Endothelial cell of umbilical vein (primary cell): ENCODE measurements at regions of chr5 and their contacts with region 1.

Region 1: DNA sequence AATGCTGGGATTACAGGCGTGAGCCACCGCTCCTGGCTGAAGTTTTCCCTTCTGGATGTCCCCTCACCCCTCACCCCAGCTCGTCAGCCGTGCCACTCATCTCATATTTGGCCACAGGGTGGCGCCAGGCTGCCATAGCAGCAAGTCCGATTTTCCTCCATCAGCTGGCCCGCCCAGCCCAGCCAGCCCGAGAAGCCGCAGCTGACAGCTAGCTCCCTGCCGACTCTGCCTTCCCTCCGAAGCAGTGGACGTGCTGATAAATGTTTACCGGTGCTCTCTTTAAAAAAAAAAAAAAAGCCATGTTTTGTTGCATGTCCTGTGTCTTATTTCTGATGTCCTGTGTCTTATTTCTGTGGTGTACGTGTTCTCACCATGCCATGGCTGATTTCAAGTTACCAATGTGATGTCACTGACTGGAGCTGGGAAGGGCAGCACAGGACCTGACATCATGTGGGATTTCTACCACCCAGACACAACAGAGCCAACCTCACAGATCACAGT is 58.3 kb downstream of the PFDN1 start:
- DNase-seq: peak; percentile 88
- H3K4me3 ChIP-seq: no peak overlapping the region
- H3K27ac ChIP-seq: peak overlapping the region; percentile 57
- H3K4me1 ChIP-seq: peaks cover 41% of the 10 kb centered on the region
- H3K27me3 ChIP-seq: no peaks in the 10 kb centered on the region
- CTCF ChIP-seq: peak; percentile 72 to 86
- POLR2A ChIP-seq: no peak

Region 2: GRCh38 chr5:140042643-140043500 is 201.7 kb before region 1 on chr5 and contains the start of gene NRG2:
- CTCF ChIA-PET with region 1: no interaction called
- POLR2A ChIA-PET with region 1: no interaction called
- dilution Hi-C with region 1: no loop called
- intact Hi-C with region 1: no loop called
- DNase-seq: peak; percentile 65
- H3K4me3 ChIP-seq: peak within 1 kb of the TSS; percentile 23 to 54 (median 44)
- H3K27ac ChIP-seq: no peak within 1 kb of the TSS
- H3K4me1 ChIP-seq: peaks cover 27% of the 10 kb centered on the region
- H3K27me3 ChIP-seq: peaks cover 3 to 12% of the 10 kb centered on the region in 2 experiments
- CTCF ChIP-seq: peak; percentile 32 to 72
- POLR2A ChIP-seq: no peak
- total RNA-seq, gene NRG2: 0.30 and 0.42 TPM in 2 replicates

Region 3: DNA sequence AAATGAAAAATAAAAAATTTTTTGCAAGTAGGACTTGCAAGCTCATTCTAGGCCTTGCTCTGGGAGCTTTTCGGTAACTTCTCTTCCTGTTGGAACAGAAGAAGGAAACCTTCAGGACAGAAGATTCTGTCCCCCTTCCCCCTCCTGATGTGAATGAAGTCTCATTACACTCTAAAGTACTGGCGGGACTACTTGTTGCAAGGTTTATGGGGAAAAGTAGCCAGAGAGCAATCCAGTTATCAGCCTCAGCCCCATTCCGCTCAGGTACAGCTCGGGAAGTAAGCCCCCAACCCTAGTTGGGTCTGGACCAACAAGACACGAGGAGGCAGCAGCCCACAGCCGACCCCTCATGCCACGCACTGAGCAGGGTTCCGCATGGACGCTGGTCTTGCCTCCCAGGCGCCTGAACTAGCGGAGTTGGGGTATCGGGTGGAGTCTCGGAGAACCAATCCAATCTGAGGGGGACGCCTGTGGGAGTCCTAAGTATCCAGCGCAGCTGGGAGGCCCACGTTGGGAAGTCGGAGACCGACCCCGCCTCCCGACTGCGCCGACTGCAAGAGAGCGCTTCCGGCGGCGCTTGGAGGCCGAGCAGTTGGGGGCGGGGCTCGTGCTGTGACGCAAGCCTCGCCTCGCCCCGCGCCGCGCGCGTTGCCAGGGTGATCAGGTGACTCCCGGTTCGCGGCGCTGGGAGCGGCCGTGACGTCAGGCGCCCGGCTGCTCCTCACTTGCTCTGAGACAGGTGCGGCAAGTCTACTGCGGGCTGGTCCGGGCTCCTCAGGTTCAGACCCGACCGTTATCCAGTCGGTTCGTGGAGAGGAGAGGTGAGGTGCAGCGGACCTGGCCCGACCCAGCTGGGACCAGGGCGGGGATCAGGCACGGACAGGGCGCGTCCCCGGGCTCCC is 69.9 kb before region 1 on chr5 and contains the start of gene CYSTM1:
- CTCF ChIA-PET with region 1: interaction called, 31 read pairs
- POLR2A ChIA-PET with region 1: no interaction called
- dilution Hi-C with region 1: no loop called
- intact Hi-C with region 1: loop called (anchors 2 kb)
- DNase-seq: peak; percentile 93
- H3K4me3 ChIP-seq: peak within 1 kb of the TSS; percentile 49 to 100 (median 56)
- H3K27ac ChIP-seq: peak within 1 kb of the TSS; percentile 75
- H3K4me1 ChIP-seq: peaks cover 11% of the 10 kb centered on the region
- H3K27me3 ChIP-seq: peaks cover 0 to 1% of the 10 kb centered on the region in 2 experiments
- CTCF ChIP-seq: no peak
- POLR2A ChIP-seq: peak; percentile 69
- total RNA-seq, gene CYSTM1: 28.9 and 36.0 TPM in 2 replicates

Region 4: DNA sequence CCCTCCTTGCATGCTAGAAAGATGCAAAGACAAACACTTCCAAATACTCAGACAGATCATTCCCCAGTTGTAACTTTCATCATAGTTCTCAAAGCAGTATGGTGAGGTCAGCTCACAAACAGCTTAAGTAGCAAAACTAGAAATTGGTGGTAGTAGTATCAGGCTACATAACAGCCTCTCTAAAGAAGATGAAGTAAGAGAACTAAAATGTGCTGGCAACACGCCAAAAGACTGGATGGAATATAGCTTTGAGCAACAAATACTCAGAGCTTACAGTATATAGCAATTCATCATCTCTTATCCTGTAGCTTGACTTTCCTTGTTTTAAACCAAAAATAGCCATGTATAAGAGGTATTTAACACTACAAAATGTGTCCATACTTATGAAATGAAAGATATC is 50.8 kb after region 1 on chr5:
- CTCF ChIA-PET with region 1: interaction called, 14 read pairs
- POLR2A ChIA-PET with region 1: no interaction called
- dilution Hi-C with region 1: no loop called
- intact Hi-C with region 1: loop called (anchors 1 kb)
- DNase-seq: peak; percentile 96
- H3K4me3 ChIP-seq: no peak overlapping the region
- H3K27ac ChIP-seq: peak overlapping the region; percentile 85
- H3K4me1 ChIP-seq: peaks cover 77% of the 10 kb centered on the region
- H3K27me3 ChIP-seq: no peaks in the 10 kb centered on the region
- CTCF ChIP-seq: no peak
- POLR2A ChIP-seq: no peak

Region 5: DNA sequence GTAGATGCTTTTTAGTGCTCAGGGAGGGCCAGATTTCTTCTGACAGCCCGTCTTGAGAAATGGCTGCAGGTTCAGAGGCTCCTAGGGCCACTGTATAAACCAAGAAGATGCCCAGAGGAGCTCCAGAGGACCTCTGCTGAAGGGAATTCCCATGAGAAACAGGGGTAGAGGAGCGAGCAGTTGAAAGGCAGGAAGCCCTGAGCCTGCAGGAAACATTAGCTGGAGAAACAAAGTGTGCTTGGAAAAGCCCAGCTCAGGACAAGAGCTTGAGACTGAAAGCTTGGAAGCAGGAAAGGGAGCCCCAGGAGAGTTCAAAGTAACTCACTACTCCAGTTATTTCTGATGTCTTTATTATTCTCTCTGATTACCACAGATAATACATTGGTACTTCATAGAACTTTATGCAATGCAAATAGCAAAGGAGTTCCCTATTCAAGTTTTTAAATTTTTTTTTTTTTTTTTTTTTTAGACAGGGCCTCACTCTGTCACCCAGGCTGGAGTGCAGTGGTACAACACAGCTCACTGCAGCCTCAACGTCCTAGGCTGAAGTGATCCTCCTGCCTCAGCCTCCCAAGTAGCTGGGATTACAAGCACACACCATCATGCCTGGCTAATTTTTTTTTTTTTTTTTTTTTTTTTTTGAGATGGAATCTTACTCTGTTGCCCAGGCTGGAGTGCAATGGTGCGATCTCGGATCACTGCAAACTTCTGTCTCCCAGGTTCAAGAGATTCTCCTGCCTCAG is 85.3 kb after region 1 on chr5:
- CTCF ChIA-PET with region 1: interaction called, 23 read pairs
- POLR2A ChIA-PET with region 1: interaction called, 4 read pairs
- dilution Hi-C with region 1: no loop called
- intact Hi-C with region 1: no loop called
- DNase-seq: peak; percentile 94
- H3K4me3 ChIP-seq: no peak overlapping the region
- H3K27ac ChIP-seq: peak overlapping the region; percentile 61
- H3K4me1 ChIP-seq: peaks cover 30% of the 10 kb centered on the region
- H3K27me3 ChIP-seq: no peaks in the 10 kb centered on the region
- CTCF ChIP-seq: no peak
- POLR2A ChIP-seq: no peak

Region 6: DNA sequence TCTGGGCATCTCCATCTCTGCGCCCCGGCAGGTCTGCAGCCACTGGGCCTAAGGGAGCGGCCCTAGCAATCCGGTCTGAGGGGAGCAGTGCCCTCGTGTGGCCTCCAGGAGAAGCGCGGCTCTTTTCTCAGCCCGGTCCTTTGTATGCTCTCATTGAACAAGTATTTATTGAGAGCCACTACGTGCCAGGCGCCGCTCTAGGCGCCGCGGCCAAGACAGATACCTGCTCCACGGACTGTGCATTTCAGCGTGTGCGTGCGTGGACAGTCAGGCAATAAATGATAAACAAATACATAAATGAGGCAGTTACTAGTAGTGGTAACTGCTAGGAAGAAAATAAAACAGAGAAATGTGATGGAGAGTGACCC is 113.1 kb after region 1 on chr5:
- CTCF ChIA-PET with region 1: interaction called, 1,214 read pairs
- POLR2A ChIA-PET with region 1: interaction called, 5 read pairs
- dilution Hi-C with region 1: no loop called
- intact Hi-C with region 1: loop called (anchors 1 kb)
- DNase-seq: peak; percentile 88
- H3K4me3 ChIP-seq: no peak overlapping the region
- H3K27ac ChIP-seq: no peak overlapping the region
- H3K4me1 ChIP-seq: no peaks in the 10 kb centered on the region
- H3K27me3 ChIP-seq: no peaks in the 10 kb centered on the region
- CTCF ChIP-seq: peak; percentile 94 to 97
- POLR2A ChIP-seq: no peak

Region 7: GRCh38 chr5:140418862-140419520 is 174.4 kb after region 1 on chr5:
- CTCF ChIA-PET with region 1: no interaction called
- POLR2A ChIA-PET with region 1: no interaction called
- dilution Hi-C with region 1: no loop called
- intact Hi-C with region 1: no loop called
- DNase-seq: no peak
- H3K4me3 ChIP-seq: no peak overlapping the region
- H3K27ac ChIP-seq: no peak overlapping the region
- H3K4me1 ChIP-seq: no peaks in the 10 kb centered on the region
- H3K27me3 ChIP-seq: no peaks in the 10 kb centered on the region
- CTCF ChIP-seq: no peak
- POLR2A ChIP-seq: no peak

Region 8: DNA sequence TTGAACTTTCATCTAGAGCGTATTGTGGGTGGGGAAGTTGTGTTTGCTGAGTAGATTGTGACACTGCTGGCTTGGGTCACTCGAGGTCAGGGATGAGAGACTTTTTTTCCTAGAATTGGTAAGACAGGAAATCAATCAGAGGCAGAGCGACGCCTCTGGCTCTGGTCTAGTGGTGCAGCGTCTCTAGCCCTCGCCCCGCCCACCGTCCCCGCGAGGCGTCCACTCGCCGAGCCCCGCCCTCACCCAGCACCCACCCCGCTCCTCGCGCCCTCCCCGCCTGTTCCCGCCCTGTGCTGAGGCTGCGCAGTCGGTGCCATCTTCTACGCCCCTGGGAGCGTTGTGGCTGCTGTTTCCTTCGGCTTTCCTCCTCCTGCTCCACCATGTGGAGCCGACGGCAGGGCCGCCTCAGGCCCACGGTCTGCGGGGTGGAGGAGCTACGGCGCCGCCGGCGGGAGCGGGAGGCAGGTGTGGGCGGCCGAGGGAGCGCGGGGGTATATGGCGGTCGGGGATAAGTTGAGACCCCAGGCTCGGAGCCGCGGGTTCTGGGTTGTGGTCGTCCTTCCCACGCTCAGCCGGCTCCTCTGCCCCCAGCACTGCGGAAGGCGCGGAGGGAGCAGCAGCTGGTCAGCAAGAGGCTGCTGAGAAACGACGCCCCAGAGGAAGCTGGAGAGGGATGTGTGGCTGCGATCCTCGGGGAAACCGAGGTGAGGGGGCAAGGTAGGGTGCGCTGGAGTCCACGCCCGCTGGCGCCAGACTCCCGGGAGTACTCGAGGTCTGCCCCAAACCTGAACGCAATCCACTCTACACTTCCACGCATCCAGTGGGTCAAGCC is 394.8 kb after region 1 on chr5 and contains the start of gene TMCO6:
- CTCF ChIA-PET with region 1: interaction called, 3 read pairs
- POLR2A ChIA-PET with region 1: no interaction called
- dilution Hi-C with region 1: no loop called
- intact Hi-C with region 1: loop called (anchors 10 kb)
- DNase-seq: peak; percentile 96
- H3K4me3 ChIP-seq: peak within 1 kb of the TSS; percentile 37 to 54 (median 40)
- H3K27ac ChIP-seq: peak within 1 kb of the TSS; percentile 41
- H3K4me1 ChIP-seq: peaks cover 11% of the 10 kb centered on the region
- H3K27me3 ChIP-seq: no peaks in the 10 kb centered on the region
- CTCF ChIP-seq: peak; percentile 31 to 74
- POLR2A ChIP-seq: peak; percentile 89
- total RNA-seq, gene TMCO6: 14.2 and 23.7 TPM in 2 replicates